ENCODE measurements at regions of chr9 and their contacts with region 1.

Region 1: GRCh38 chr9:91629718-91630117 is 206.1 kb upstream of the NFIL3 start:
- DNase-seq: no peak

Region 2: GRCh38 chr9:89786331-89787054 is 1843.2 kb before region 1 on chr9:
- intact Hi-C with region 1: loop called in 1 of 2 experiments (anchors 5 kb)
- DNase-seq: no peak

Measured in posterior vena cava (tissue), 2 donors.